ENCODE measurements at regions of chrX and their contacts with region 1.

Region 1: GRCh38 chrX:136168929-136169735 is 21.8 kb downstream of the FHL1 start:
- DNase-seq: peak; percentile 90
- H3K4me3 ChIP-seq: no peak overlapping the region
- H3K27ac ChIP-seq: peak overlapping the region; percentile 94 to 99 (median 97)
- H3K4me1 ChIP-seq: peaks cover 0 to 83% (median 52%) of the 10 kb centered on the region in 4 donors
- H3K27me3 ChIP-seq: no peaks in the 10 kb centered on the region
- CTCF ChIP-seq: no peak
- EP300 ChIP-seq: peak in 3 of 4 donors; percentile 42 to 78 (median 77)
- POLR2A ChIP-seq: no peak

Region 2: DNA sequence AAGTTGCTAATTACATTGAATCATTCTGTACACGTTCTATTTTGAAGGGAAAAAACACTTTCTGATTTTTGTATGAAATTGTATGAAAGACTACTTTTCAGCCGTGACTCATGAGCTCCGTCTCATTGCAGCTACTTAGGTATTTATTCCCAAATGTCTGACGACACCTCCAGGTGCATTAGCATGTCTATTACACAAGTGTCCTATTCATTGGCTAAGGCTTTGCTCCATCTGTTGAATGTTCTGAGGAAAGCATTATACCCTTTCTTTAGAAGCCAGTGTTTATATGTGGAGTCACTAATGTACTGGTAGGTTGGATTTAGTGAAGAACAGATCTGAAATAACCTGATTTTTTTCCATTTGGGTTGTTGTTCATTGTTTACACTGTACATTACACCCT is 30.2 kb after region 1 on chrX:
- intact Hi-C with region 1: loop called (anchors 2 kb)
- DNase-seq: no peak
- H3K4me3 ChIP-seq: peak overlapping the region; percentile 4 to 48 (median 44)
- H3K27ac ChIP-seq: peak overlapping the region; percentile 78 to 99 (median 95)
- H3K4me1 ChIP-seq: peaks cover 0 to 46% (median 21%) of the 10 kb centered on the region in 4 donors
- H3K27me3 ChIP-seq: no peaks in the 10 kb centered on the region
- CTCF ChIP-seq: no peak
- EP300 ChIP-seq: peak in 1 of 4 donors; percentile 11
- POLR2A ChIP-seq: peak in 1 of 2 donors; percentile 5

Region 3: DNA sequence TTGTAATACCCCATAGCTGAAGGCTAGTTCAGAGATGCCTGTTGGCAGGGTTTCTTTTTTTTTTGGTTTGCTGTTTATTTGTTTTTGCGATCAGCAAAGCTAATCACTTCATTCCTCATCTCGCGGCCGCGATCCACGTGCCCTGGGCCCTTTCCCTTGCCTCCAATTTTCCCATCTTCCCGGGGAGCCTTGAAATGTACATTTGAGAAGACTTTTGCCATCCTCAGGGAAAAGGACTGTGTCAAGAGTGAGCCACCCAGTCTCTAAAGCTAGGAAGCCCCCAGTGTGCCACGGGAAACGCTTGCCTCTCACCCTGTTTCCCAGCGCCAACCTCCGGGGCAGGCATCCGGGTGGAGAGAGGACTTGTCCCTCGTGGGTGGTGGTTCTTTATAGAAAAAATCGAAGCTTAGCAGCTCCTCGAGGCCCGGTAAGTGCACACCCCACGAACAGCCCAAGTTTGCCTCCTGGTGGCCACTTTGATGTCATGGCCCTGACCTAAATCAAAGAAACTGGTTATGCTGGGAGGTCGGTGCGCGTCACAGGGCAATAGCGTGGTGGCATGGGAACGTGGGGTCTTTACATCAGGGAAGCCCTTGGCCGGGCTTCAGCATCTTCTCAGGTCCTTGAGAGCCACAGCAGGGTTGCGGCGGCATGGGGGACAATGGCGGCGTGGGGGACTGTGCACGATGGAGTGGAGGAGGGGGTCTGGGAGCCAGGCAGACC is 40.0 kb after region 1 on chrX:
- intact Hi-C with region 1: loop called (anchors 2 kb)
- DNase-seq: peak; percentile 84
- H3K4me3 ChIP-seq: no peak overlapping the region
- H3K27ac ChIP-seq: peak overlapping the region; percentile 78 to 99 (median 95)
- H3K4me1 ChIP-seq: peaks cover 0 to 56% (median 48%) of the 10 kb centered on the region in 4 donors
- H3K27me3 ChIP-seq: no peaks in the 10 kb centered on the region
- CTCF ChIP-seq: peak; percentile 45 to 62 (median 52)
- EP300 ChIP-seq: no peak
- POLR2A ChIP-seq: no peak

Region 4: DNA sequence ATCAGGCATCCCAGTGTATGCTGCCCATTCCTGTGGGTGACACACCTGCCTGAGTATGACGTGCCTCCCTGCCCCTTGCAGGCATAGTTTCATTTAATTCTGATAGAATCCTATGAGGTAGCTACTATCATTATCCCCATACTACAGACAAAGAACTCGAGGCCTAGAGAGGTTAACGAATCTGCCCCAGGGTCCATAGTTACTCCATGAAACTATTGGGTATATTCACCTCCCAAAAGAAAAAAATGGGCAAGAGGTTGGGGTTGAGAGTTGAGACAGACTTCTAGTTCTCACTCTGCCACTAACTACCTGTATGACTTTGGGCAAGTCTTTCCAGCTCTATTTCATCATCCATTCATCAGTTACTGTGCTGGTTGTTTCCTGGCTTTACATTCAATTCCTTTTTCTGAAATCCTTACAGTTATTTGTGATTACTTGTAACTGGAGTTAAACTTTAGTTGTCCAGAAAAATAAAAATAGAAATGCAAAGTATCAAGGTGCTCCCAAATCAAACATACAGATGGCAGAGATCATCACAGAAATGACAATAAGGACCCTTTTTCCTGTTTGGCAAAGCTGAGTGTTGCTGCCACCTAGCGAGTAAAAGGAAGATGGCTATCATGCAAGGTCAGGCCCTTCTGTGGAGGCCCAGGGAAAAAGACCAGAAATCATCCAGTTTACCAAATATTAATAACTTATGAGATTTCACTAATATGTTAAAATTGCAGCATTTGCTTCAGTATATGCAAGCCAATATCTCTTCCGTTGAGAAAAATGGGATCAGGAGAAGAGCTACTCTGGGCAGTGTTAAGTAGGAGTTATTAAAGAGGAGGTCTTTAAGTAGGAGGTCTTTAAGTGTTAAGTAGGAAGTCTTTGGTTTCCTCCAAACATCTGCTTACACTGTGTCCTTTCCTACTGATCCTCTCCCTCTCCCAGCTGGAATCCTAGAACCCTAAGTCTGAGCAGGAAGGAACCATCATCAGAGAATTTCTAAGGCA is 99.2 kb after region 1 on chrX:
- intact Hi-C with region 1: loop called (anchors 5 kb)
- DNase-seq: no peak
- H3K4me3 ChIP-seq: no peak overlapping the region
- H3K27ac ChIP-seq: no peak overlapping the region
- H3K4me1 ChIP-seq: no peaks in the 10 kb centered on the region
- H3K27me3 ChIP-seq: no peaks in the 10 kb centered on the region
- CTCF ChIP-seq: peak; percentile 41 to 64 (median 58)
- EP300 ChIP-seq: no peak
- POLR2A ChIP-seq: no peak

Region 5: DNA sequence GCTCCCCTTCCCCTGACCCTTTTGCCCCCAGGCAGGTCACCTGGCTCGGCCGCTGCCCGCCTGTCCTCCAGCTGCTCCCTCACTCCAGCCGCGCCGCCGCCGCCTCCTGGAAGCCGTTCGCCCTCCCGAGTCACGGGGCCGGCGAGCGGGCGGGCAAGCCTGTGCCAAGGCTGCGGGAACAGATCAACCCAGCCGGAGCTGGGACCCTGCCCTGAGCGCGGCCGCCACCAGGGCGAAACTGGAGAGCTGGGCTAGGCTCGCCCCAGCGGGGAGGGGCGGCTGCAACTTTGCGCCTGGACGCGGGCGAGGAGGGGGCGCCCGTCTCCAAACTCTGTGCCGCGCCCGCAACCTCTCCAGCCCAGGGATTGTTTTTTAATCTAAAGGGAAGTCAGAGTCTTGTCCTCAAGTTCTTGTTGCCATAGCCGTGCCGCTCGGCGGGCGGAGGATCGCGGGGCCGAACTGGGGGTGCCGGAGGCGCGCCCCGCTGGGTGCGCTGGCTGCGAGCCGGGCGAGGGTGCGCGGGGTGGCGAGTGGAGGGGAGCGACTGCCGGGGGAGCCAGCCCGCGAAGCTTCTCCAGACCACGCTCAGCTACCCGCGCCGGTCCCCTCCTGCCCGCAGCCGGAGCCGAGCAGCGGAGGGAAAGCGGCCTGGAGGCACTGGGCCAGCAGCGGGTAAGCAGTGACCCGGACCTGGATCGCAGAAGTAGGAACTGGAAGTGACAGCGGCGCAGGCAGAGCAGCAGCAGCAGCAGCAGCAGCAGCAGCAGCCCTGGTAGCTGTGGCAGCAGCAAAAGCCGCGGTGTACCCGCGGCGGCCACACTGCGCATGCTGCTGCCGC is 598.2 kb after region 1 on chrX:
- intact Hi-C with region 1: no loop called
- DNase-seq: peak; percentile 87
- H3K4me3 ChIP-seq: peak overlapping the region; percentile 51 to 72 (median 67)
- H3K27ac ChIP-seq: peak overlapping the region; percentile 84 to 91 (median 88)
- H3K4me1 ChIP-seq: no peaks in the 10 kb centered on the region
- H3K27me3 ChIP-seq: no peaks in the 10 kb centered on the region
- CTCF ChIP-seq: peak in 2 of 4 experiments; percentile 17 to 43
- EP300 ChIP-seq: no peak
- POLR2A ChIP-seq: no peak

Region 6: DNA sequence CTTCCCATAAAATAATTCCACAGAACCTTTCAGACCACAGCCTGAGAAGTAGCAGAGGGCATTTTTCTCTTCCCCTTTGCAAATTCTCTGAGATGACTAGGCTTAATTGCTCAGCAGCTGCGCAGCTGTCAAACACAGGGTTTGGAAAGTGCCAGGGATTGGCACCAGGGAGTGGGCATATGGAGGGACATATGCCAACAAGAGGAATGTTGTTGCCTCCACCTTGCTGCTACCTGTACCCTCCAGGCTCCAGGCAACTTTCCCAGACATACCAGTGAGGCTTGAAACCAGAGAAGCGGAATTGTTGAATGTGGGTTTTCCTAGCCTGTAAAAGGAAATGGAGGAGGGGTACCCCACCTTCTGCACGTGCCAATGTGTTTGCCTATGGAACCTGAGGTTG is 1120.9 kb after region 1 on chrX:
- intact Hi-C with region 1: no loop called
- DNase-seq: no peak
- H3K4me3 ChIP-seq: no peak overlapping the region
- H3K27ac ChIP-seq: no peak overlapping the region
- H3K4me1 ChIP-seq: no peaks in the 10 kb centered on the region
- H3K27me3 ChIP-seq: no peaks in the 10 kb centered on the region
- CTCF ChIP-seq: no peak
- EP300 ChIP-seq: no peak
- POLR2A ChIP-seq: no peak